Caco-2 (cell line): ENCODE measurements at regions of chr11 and their contacts with region 1.

Region 1: GRCh38 chr11:17730608-17731462 is 3.7 kb upstream of the KCNC1 start:
- DNase-seq: peak; percentile 81 to 90
- H3K4me3 ChIP-seq: no peak overlapping the region
- H3K4me3 Mint-ChIP-seq: no peak overlapping the region
- H3K27ac Mint-ChIP-seq: no peak overlapping the region
- H3K4me1 ChIP-seq: peaks cover 12% of the 10 kb centered on the region; the same call in 1 of the 2 replicates
- H3K4me1 Mint-ChIP-seq: no peaks in the 10 kb centered on the region
- H3K27me3 ChIP-seq: no peaks in the 10 kb centered on the region; the same call in 1 of the 2 replicates
- H3K27me3 Mint-ChIP-seq: peaks cover 21% of the 10 kb centered on the region
- CTCF ChIP-seq: peak; percentile 84 to 94

Region 2: DNA sequence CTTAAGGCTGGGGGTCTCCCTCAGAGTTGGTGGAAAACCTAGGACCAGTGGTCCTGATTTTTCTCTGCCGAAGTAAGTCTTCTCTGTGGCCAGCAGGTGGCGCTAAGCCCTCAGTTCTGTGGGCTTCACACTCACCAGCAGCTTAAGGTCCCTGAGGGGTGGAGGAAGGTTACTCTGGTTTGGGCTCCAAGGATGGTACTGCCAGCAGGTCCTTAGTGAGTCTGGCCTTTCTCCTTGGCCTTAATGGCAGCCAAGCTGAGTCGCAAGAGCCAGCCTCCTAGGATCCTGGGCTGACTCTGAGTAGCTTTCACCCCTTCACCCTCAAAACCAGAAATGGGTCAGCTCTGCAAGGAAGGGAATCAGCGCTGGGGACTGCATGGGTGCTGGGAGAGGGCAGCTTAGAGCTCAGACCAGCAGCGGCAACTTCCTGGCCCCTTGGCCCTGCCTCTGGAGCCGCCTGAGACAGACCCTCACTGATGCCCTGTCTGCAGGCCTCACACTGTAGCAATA is 346.8 kb before region 1 on chr11:
- CTCF ChIA-PET with region 1: interaction called, 12 read pairs
- POLR2A ChIA-PET with region 1: no interaction called
- intact Hi-C with region 1: no loop called
- DNase-seq: peak; percentile 77 to 82
- H3K4me3 ChIP-seq: no peak overlapping the region
- H3K4me3 Mint-ChIP-seq: no peak overlapping the region
- H3K27ac Mint-ChIP-seq: no peak overlapping the region
- H3K4me1 ChIP-seq: no peaks in the 10 kb centered on the region
- H3K4me1 Mint-ChIP-seq: no peaks in the 10 kb centered on the region
- H3K27me3 ChIP-seq: no peaks in the 10 kb centered on the region; the same call in 1 of the 2 replicates
- H3K27me3 Mint-ChIP-seq: no peaks in the 10 kb centered on the region
- CTCF ChIP-seq: peak; percentile 89 to 93

Region 3: GRCh38 chr11:17711836-17712235 is 19.0 kb before region 1 on chr11:
- CTCF ChIA-PET with region 1: interaction called, 13 read pairs
- POLR2A ChIA-PET with region 1: no interaction called
- intact Hi-C with region 1: no loop called
- DNase-seq: no peak
- H3K4me3 ChIP-seq: no peak overlapping the region
- H3K4me3 Mint-ChIP-seq: no peak overlapping the region
- H3K27ac Mint-ChIP-seq: no peak overlapping the region
- H3K4me1 ChIP-seq: no peaks in the 10 kb centered on the region
- H3K4me1 Mint-ChIP-seq: no peaks in the 10 kb centered on the region
- H3K27me3 ChIP-seq: peaks cover 4% of the 10 kb centered on the region
- H3K27me3 Mint-ChIP-seq: peaks cover 6% of the 10 kb centered on the region
- CTCF ChIP-seq: no peak

Region 4: DNA sequence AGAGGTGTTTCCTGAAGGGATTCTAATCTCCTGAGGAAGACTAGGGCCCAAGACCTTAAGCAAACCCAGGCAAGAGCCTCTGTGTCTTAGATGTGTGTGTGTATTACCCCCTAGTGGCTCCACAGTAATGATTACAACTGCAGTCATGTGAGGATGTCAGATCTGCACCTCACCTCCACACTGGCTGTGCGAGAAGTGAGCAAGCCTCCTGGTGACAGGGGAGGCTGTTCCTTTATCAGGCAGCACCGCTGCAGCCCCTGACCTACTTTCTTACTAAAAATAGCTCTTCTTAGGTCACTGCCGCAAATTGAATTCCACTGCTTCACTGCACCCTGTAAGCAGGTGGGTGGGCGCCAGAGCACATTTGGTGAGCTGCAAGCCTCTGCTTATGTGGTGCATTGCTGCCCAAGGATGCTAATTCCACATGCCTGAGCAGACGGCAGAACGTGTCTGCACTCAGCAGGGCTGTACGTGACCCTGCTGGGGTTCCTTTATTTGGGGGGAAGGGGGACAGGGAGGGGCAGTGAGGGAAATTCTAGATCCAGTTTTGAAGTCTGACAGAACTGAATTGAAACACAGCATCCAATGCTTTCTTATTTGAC is 116.1 kb after region 1 on chr11:
- CTCF ChIA-PET with region 1: interaction called, 8 read pairs
- POLR2A ChIA-PET with region 1: no interaction called
- intact Hi-C with region 1: loop called (anchors 1 kb)
- DNase-seq: peak in 1 of 2 experiments; percentile 8
- H3K4me3 ChIP-seq: no peak overlapping the region
- H3K4me3 Mint-ChIP-seq: no peak overlapping the region
- H3K27ac Mint-ChIP-seq: no peak overlapping the region
- H3K4me1 ChIP-seq: no peaks in the 10 kb centered on the region
- H3K4me1 Mint-ChIP-seq: no peaks in the 10 kb centered on the region
- H3K27me3 ChIP-seq: no peaks in the 10 kb centered on the region
- H3K27me3 Mint-ChIP-seq: no peaks in the 10 kb centered on the region
- CTCF ChIP-seq: peak in 1 of 2 experiments; percentile 23

Region 5: DNA sequence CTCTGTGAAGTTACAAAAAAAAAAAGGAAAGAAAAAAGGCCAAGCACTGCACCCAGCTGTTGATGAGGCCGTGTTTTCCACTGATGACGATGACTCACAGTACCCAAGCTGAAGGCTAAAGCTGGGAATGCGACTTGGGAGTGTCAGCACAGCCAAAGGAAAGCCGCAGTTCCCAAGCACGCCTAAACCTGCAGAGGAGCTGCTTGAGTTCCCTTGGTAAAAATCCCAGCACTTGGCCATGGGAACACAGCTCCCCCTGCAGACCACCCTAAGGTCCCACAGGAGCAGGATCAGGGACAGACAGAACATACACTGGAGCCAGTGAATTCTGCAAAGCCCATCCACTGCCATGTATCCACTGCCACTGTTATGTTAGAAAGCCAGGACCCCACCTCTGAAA is 242.2 kb after region 1 on chr11:
- CTCF ChIA-PET with region 1: interaction called, 55 read pairs
- POLR2A ChIA-PET with region 1: no interaction called
- intact Hi-C with region 1: no loop called
- DNase-seq: peak; percentile 51 to 65
- H3K4me3 ChIP-seq: no peak overlapping the region
- H3K4me3 Mint-ChIP-seq: no peak overlapping the region
- H3K27ac Mint-ChIP-seq: no peak overlapping the region
- H3K4me1 ChIP-seq: no peaks in the 10 kb centered on the region
- H3K4me1 Mint-ChIP-seq: no peaks in the 10 kb centered on the region
- H3K27me3 ChIP-seq: no peaks in the 10 kb centered on the region
- H3K27me3 Mint-ChIP-seq: no peaks in the 10 kb centered on the region
- CTCF ChIP-seq: peak; percentile 41 to 75

Region 6: GRCh38 chr11:17986007-17986710 is 255.3 kb after region 1 on chr11:
- CTCF ChIA-PET with region 1: interaction called, 11 read pairs
- POLR2A ChIA-PET with region 1: no interaction called
- intact Hi-C with region 1: no loop called
- DNase-seq: no peak
- H3K4me3 ChIP-seq: no peak overlapping the region
- H3K4me3 Mint-ChIP-seq: no peak overlapping the region
- H3K27ac Mint-ChIP-seq: no peak overlapping the region
- H3K4me1 ChIP-seq: peaks cover 24% of the 10 kb centered on the region
- H3K4me1 Mint-ChIP-seq: peaks cover 12% of the 10 kb centered on the region
- H3K27me3 ChIP-seq: no peaks in the 10 kb centered on the region
- H3K27me3 Mint-ChIP-seq: no peaks in the 10 kb centered on the region
- CTCF ChIP-seq: no peak